ENCODE measurements at regions of chr2 and their contacts with region 1.

Region 1: DNA sequence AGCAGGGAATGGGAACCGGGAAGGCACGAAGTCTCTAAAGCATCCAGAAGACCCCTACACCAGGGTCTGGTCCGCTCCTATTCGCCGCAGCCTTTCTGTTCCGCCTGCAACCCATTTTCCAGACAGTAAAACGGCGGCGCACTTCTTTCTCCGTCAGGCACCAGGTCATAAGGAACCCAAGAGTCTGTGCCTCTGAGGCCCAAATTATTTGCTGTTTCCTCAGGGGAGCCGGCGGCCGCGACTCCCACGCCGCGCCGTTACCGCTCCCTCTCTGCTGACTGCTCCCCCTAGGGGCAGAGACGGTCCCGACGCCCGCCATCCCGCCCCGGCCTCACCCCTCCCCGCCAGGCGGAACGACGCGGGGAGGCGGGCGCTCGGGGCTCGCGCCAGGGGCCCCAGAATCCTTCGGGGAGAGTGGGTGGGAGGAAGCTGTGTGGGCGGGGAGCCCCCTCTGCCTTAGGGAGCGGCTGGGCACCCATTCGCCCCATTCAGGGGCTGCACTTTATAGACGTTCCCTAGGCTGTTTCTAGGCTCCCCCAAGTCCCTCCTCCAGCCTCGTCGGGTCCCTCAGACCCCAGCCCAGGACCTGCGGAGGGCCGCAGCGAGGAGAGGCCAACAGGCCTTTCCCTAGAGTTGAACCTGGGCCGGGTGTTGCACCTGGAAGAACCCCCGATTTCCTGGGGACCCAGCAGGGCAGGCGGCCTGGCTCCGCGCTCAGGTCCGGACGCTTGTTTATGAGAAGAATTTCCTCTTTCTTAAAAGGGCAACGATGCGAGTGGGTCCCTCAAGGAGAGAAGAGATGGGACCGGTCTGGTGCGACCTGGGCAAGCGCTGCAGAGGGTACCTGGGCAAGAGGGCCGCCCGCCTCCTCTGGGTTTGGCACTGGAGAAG is 3.6 kb upstream of the CTDSP1 start:
- DNase-seq: peak; percentile 93
- H3K4me3 Mint-ChIP-seq: peak overlapping the region; percentile 94
- H3K27ac Mint-ChIP-seq: peak overlapping the region; percentile 98
- H3K4me1 Mint-ChIP-seq: peaks cover 40% of the 10 kb centered on the region
- H3K27me3 Mint-ChIP-seq: peaks cover 3% of the 10 kb centered on the region

Region 2: DNA sequence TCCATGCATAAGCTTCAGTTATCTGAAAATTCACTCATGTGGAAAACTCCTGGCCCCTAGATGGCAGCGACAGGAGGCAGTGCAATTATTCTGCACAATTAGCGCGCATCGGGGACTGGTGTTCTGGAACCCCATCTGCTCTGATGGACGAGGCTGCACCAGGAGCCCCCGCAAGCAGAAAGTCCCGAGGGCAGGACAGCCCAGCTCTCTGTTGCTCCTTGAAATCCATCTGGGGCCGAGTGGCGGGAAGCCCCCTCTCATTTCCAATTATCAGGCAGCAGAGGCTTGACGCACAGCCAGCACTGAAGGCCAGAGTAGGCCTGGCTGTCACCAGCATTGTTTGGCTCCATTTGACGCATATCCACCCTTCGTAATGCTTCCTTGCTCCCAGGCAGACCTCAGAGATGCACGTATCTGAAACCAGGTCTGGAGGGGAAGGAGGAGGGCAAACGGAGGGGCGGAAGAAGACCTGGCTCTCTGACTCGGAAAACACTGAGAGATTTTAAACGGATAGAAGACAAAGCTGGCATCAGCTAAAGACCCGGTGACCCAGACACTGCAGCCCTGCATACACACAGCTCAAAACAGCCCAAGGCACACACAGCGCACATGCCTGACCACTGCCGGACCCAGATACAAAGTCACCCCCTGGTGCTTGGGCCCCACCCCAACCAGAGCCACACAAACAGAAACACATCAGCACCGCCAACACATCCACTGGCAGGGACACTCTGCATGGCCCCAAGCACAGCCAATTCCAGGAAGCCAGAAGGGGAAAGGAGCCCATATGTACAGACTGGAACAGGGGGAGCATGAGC is 463.0 kb before region 1 on chr2:
- intact Hi-C with region 1: no loop called
- DNase-seq: no peak
- H3K4me3 Mint-ChIP-seq: no peak overlapping the region
- H3K27ac Mint-ChIP-seq: no peak overlapping the region
- H3K4me1 Mint-ChIP-seq: peaks cover 16% of the 10 kb centered on the region
- H3K27me3 Mint-ChIP-seq: no peaks in the 10 kb centered on the region

Region 3: GRCh38 chr2:218216674-218217359 is 179.2 kb before region 1 on chr2 and contains the start of gene ARPC2:
- intact Hi-C with region 1: loop called (anchors 2 kb)
- DNase-seq: peak; percentile 96
- H3K4me3 Mint-ChIP-seq: peak within 1 kb of the TSS; percentile 91
- H3K27ac Mint-ChIP-seq: peak within 1 kb of the TSS; percentile 95
- H3K4me1 Mint-ChIP-seq: peaks cover 36% of the 10 kb centered on the region
- H3K27me3 Mint-ChIP-seq: no peaks in the 10 kb centered on the region
- total RNA-seq, gene ARPC2: 507 and 509 TPM in 2 replicates

Region 4: GRCh38 chr2:218292048-218293014 is 103.7 kb before region 1 on chr2 and contains the start of gene TMBIM1:
- intact Hi-C with region 1: loop called (anchors 1 kb)
- DNase-seq: peak; percentile 79
- H3K4me3 Mint-ChIP-seq: peak within 1 kb of the TSS; percentile 88
- H3K27ac Mint-ChIP-seq: peak within 1 kb of the TSS; percentile 94
- H3K4me1 Mint-ChIP-seq: peaks cover 57% of the 10 kb centered on the region
- H3K27me3 Mint-ChIP-seq: no peaks in the 10 kb centered on the region
- total RNA-seq, gene TMBIM1: 66.2 and 70.5 TPM in 2 replicates

Region 5: GRCh38 chr2:218367415-218368153 is 28.5 kb before region 1 on chr2:
- intact Hi-C with region 1: loop called (anchors 2 kb)
- DNase-seq: peak; percentile 64
- H3K4me3 Mint-ChIP-seq: peak overlapping the region; percentile 78
- H3K27ac Mint-ChIP-seq: peak overlapping the region; percentile 61
- H3K4me1 Mint-ChIP-seq: peaks cover 7% of the 10 kb centered on the region
- H3K27me3 Mint-ChIP-seq: peaks cover 42% of the 10 kb centered on the region

Region 6: GRCh38 chr2:218659258-218659987 is 263.4 kb after region 1 on chr2 and contains the starts of genes BCS1L and ZNF142:
- intact Hi-C with region 1: loop called (anchors 1 kb)
- DNase-seq: peak; percentile 92
- H3K4me3 Mint-ChIP-seq: peak within 1 kb of the TSS; percentile 99
- H3K27ac Mint-ChIP-seq: peak within 1 kb of the TSS; percentile 97
- H3K4me1 Mint-ChIP-seq: peaks cover 29% of the 10 kb centered on the region
- H3K27me3 Mint-ChIP-seq: no peaks in the 10 kb centered on the region
- total RNA-seq, gene BCS1L: 85.1 and 85.3 TPM in 2 replicates
- total RNA-seq, gene ZNF142: 61.8 and 64.4 TPM in 2 replicates

Region 7: DNA sequence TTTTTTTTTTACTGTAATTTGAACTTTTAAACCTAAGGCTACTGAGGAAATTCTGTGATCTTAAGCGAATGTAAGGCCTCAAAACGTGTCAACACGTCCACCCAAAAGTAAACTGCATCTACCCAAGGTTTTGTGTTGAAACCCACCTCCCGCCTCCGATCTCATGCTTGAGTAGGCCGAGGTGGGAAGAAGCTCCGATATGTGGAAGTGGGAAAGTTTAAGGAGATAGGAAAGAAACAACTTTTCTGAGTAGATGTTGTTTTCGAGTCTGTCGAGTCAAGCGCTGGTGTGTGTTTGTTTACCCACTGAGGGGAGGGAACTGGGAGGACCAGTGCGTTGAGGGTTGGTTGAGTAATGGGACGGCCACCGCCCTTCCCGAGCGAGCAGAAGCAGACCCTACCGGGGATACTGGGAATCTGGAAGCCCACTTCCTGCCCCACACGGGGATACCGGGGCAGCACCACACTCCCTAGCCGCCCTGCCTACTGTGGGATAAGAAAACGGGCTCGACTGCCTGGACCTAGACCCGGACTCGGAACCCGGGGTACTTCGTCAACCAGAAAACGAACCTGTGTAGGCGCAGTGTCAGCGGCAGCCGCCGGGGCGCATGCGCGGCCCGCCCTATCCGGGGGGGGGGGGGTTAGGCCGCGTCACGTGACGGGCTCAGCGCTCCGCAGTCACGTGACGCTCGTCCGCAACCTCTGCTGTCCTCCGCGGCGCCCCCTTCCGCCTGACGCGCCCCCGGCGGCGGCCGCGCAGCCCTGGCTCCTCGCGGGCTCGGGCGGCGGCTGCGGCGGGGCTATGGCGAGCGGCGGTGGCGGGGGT is 781.7 kb after region 1 on chr2 and contains the start of gene RETREG2:
- intact Hi-C with region 1: loop called (anchors 5 kb)
- DNase-seq: peak; percentile 74
- H3K4me3 Mint-ChIP-seq: peak within 1 kb of the TSS; percentile 91
- H3K27ac Mint-ChIP-seq: peak within 1 kb of the TSS; percentile 96
- H3K4me1 Mint-ChIP-seq: peaks cover 72% of the 10 kb centered on the region
- H3K27me3 Mint-ChIP-seq: no peaks in the 10 kb centered on the region
- total RNA-seq, gene RETREG2: 58.4 and 61.5 TPM in 2 replicates

Region 8: GRCh38 chr2:219388127-219388844 is 992.2 kb after region 1 on chr2:
- intact Hi-C with region 1: loop called (anchors 5 kb)
- DNase-seq: peak; percentile 95
- H3K4me3 Mint-ChIP-seq: peak overlapping the region; percentile 97
- H3K27ac Mint-ChIP-seq: peak overlapping the region; percentile 67
- H3K4me1 Mint-ChIP-seq: peaks cover 6% of the 10 kb centered on the region
- H3K27me3 Mint-ChIP-seq: peaks cover 23% of the 10 kb centered on the region

Measured in activated T-helper 1 cell treated with anti-CD3 and anti-CD28 coated beads, Interleukin-12 subunit alpha, Interleukin-12 subunit beta, Interleukin-2, Interleukin-4 antibody, amounts not matched to agents 30 ng/mL and 10 ng/mL and 1 ng/mL, durations not matched to agents 14 hours and 24 hours and 36 hours (primary cell).